H1 (cell line): ENCODE measurements at regions of chrX and their contacts with region 1.

Region 1: DNA sequence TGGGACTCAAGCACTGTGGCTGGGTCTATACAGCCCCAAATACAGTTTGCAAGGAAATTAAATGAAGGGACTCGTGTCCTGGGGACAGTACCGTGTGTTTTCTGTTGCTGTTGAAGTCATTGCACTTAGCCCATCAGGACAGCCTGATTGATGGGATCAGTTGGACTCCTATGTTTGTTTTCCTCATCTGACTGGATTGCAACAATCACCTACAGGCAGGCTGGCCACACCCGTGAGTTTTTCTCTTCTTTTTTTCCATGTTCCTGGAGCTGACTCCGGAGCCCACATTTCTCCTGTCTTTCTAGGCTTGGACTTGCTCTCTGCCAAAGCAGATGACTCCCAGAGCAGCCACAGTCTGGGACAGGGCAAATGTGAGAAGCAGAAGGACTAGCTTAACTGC is 38.1 kb downstream of the RTL9 start:
- DNase-seq: no peak
- H3K4me3 ChIP-seq: no peak overlapping the region
- H3K27ac ChIP-seq: no peak overlapping the region
- H3K4me1 ChIP-seq: peaks cover 0 to 5% (median 0%) of the 10 kb centered on the region in 4 experiments; a peak in 1 of 7 replicates
- H3K27me3 ChIP-seq: no peaks in the 10 kb centered on the region
- CTCF ChIP-seq: no peak
- EP300 ChIP-seq: no peak
- POLR2A ChIP-seq: no peak
- RAD21 ChIP-seq: no peak

Region 2: DNA sequence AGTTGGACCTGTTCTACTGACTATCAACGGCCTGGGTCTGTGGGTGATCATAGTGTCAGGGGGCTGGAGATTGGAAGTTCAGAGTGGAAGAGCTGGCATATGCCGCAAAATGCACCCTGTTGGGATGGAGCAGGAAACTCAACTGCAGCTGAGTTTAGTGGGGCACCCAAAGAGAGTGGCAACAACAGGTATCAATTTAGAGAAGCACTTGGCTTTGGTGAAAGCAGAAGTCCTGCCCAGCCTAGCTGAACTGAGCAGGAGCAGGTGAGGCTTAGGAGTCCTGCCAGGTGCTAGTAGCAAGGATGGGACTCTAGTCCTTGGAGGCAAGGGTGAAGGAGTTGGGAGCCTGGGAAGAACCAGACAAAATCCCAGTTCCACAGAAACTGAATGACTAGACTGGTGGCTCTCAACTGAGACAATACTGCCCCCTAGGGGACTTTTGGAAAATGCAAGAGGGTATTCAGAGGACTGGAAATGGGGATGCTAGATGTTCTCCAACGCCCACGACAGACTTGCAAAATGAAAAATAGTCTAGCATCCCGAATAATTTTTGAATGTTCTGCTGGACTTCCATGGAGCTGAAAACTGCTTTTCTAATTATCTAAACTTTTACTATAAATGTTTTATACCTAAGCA is 11.3 kb after region 1 on chrX:
- CTCF ChIA-PET with region 1: interaction called, 14 read pairs
- POLR2A ChIA-PET with region 1: no interaction called
- DNase-seq: peak in 1 of 2 experiments; percentile 62
- H3K4me3 ChIP-seq: no peak overlapping the region
- H3K27ac ChIP-seq: no peak overlapping the region
- H3K4me1 ChIP-seq: no peaks in the 10 kb centered on the region; a peak in 1 of 7 replicates
- H3K27me3 ChIP-seq: no peaks in the 10 kb centered on the region
- CTCF ChIP-seq: peak in 2 of 3 experiments; percentile 47 to 73; a peak in 3 of 4 replicates
- EP300 ChIP-seq: no peak
- POLR2A ChIP-seq: no peak
- RAD21 ChIP-seq: peak; percentile 85 to 90